OCI-LY7 (cell line): ENCODE measurements at regions of chr13 and their contacts with region 1.

Region 1: DNA sequence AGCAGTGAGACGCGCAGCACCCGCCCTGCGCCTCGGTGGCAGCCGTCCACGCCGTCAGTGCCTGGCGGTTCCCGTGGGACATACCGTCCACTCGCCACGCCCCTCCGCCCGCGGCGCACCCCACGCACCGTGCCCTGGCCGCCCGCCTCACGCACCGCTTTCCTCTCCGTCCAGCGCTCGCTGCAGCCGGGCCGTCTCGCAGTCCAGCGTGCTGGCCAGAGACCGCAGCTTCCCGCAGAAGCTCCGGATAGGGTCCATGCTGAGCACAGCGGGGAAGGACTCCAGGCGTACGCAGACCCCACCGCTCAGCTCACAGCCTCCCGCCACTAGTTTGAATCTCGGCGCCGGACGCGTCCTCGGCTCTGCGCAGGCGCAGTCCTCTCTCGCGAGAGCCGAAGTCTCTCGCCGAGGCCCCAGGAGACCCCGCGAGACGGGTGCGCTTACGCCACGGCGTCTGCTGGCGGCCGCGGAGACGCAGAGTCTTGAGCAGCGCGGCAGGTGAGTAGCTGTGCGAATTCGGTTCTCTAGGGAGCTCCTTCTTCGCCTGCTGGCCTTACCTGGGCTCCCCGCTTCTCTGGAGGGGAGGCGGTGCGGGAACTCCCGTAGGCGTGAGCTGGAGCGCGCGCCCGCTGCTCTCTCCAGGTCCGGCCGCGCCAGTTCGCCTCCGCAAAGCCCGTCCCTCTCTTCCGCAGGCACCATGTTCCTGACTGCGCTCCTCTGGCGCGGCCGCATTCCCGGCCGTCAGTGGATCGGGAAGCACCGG is at the starts of genes MRPL57 and SKA3:
- DNase-seq: peak; percentile 97
- H3K4me3 ChIP-seq: peak within 1 kb of the TSS; percentile 86
- H3K27ac ChIP-seq: peak within 1 kb of the TSS; percentile 75
- H3K4me1 ChIP-seq: peaks cover 30% of the 10 kb centered on the region
- CTCF ChIP-seq: no peak
- total RNA-seq, gene MRPL57: 38.9 and 52.9 TPM in 2 replicates
- total RNA-seq, gene SKA3: 28.5 and 34.4 TPM in 2 replicates

Region 2: DNA sequence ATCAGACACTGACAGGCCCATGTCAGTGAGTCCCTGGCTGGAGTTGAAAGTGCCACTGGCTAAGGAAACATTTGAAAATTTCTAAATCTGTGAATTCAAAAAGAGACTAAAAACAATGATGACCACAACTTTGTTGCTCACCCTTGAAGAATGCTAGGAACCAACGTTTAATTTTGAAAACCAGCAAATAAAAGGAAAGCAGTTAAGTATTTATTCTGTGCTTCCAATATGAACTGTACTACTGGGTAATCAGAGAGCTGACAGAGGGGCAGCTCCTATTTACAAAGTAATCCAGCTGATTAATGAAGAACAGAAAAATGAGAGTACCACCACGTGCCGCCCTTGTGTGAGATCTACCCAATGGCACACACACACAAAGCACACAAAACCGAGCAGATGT is 70.3 kb before region 1 on chr13:
- CTCF ChIA-PET with region 1: no interaction called
- POLR2A ChIA-PET with region 1: no interaction called
- intact Hi-C with region 1: loop called (anchors 1 kb)
- DNase-seq: no peak
- H3K4me3 ChIP-seq: no peak overlapping the region
- H3K27ac ChIP-seq: no peak overlapping the region
- H3K4me1 ChIP-seq: no peaks in the 10 kb centered on the region
- CTCF ChIP-seq: no peak

Region 3: GRCh38 chr13:21149568-21149967 is 26.8 kb before region 1 on chr13:
- CTCF ChIA-PET with region 1: no interaction called
- POLR2A ChIA-PET with region 1: interaction called, 20 read pairs
- intact Hi-C with region 1: no loop called
- DNase-seq: no peak
- H3K4me3 ChIP-seq: no peak overlapping the region
- H3K27ac ChIP-seq: no peak overlapping the region
- H3K4me1 ChIP-seq: peaks cover 8% of the 10 kb centered on the region
- CTCF ChIP-seq: no peak

Region 4: GRCh38 chr13:21202764-21203538 is 26.6 kb after region 1 on chr13:
- CTCF ChIA-PET with region 1: no interaction called
- POLR2A ChIA-PET with region 1: no interaction called
- intact Hi-C with region 1: no loop called
- DNase-seq: no peak
- H3K4me3 ChIP-seq: no peak overlapping the region
- H3K27ac ChIP-seq: no peak overlapping the region
- H3K4me1 ChIP-seq: no peaks in the 10 kb centered on the region
- CTCF ChIP-seq: no peak

Region 5: GRCh38 chr13:21297914-21298831 is 121.8 kb after region 1 on chr13:
- CTCF ChIA-PET with region 1: no interaction called
- POLR2A ChIA-PET with region 1: interaction called, 25 read pairs
- intact Hi-C with region 1: loop called (anchors 2 kb)
- DNase-seq: peak; percentile 94
- H3K4me3 ChIP-seq: peak overlapping the region; percentile 92
- H3K27ac ChIP-seq: peak overlapping the region; percentile 51
- H3K4me1 ChIP-seq: peaks cover 17% of the 10 kb centered on the region
- CTCF ChIP-seq: peak; percentile 77

Region 6: DNA sequence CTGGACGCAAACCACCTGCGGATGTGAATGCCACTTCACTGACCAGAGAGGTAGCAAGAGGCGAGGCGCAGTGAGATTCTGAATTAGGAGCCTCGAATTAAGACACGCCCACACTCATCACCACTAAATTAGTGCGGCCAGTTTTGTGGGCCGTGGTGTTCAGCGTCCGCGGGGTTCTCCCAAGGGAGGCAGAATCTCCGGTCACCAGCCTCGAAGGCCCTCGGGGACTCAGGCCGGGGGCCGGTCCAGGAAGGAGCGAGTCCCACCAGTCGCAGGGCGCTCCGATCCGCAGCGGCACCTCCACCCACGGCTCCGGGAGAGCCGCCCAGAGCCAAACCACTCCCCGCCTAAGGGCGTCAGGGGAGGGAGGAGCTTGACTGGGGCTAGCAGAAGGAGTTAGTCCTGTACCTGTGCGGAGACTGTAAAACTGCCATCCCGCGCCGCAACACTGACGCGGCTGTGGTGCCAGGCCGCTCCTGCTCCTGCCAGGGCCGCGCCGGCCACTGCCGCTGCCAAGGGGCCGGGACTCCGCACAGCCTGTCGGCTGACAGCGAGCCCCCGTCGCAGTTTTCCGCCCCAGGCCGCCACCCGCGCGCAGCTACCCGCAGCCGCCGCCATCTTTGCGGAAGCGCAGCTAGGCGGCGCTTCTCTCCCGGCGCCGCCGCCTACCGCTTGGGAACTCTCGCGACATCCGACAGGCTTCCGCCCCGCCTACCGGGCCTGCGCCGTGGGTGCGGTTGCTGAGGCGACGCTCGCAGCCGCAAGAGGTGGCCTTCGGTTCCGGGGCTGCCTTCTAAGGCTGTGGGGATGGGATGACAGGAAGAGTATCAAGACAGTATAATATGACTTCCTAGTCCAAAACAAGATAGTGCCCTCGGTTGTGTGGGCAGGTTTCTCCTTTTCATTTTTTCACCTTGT is 427.4 kb after region 1 on chr13 and contains the start of gene MICU2:
- CTCF ChIA-PET with region 1: no interaction called
- POLR2A ChIA-PET with region 1: interaction called, 5 read pairs
- intact Hi-C with region 1: loop called (anchors 5 kb)
- DNase-seq: peak; percentile 97
- H3K4me3 ChIP-seq: peak within 1 kb of the TSS; percentile 72
- H3K27ac ChIP-seq: peak within 1 kb of the TSS; percentile 73
- H3K4me1 ChIP-seq: peaks cover 13% of the 10 kb centered on the region
- CTCF ChIP-seq: no peak
- total RNA-seq, gene MICU2: 41.6 and 51.3 TPM in 2 replicates